Lower leg skin (tissue), 4 donors: ENCODE measurements at regions of chr11 and their contacts with region 1.

Region 1: GRCh38 chr11:3854977-3855807 is at the start of gene STIM1:
- DNase-seq: peak; percentile 95 to 99
- H3K4me3 ChIP-seq: peak within 1 kb of the TSS; percentile 79
- CTCF ChIP-seq: peak in 2 of 3 donors; percentile 94 to 95
- POLR2A ChIP-seq: no peak
- total RNA-seq, gene STIM1: 43.7 to 75.9 (median 64.9) TPM

Region 2: DNA sequence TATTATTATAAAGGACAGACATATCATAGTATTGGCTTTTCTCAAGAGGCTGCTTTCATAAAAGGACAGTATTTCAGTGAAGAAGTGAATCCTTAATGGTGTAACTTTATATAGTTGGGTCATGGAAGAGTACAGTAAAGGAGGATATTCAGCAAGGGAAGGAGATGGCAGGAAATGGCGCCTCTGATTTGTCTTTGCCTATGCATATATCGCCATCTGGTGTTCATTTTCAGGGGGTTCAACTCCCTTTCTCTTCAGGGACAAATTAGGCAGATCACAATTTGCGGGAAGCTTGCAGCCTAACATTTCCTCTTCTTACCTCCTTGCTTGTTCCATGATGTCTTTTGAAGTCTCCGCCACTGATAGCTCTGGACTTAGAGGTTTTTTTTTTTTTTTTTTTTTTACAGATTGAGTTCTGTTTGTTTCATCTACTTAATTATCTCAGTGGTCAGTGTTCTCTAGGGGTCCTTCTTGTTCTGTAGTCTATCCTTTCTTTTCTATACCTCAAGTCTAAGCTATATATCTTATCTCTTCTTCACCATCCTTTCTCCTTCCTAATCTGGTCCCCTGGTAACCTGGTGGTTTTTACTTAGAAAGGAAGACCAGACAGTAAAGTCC is 217.6 kb after region 1 on chr11:
- intact Hi-C with region 1: loop called (anchors 5 kb)
- DNase-seq: peak in 1 of 2 donors; percentile 73
- H3K4me3 ChIP-seq: no peak overlapping the region
- CTCF ChIP-seq: peak in 1 of 3 donors; percentile 65
- POLR2A ChIP-seq: no peak